ENCODE measurements at regions of chr5 and their contacts with region 1.

Region 1: DNA sequence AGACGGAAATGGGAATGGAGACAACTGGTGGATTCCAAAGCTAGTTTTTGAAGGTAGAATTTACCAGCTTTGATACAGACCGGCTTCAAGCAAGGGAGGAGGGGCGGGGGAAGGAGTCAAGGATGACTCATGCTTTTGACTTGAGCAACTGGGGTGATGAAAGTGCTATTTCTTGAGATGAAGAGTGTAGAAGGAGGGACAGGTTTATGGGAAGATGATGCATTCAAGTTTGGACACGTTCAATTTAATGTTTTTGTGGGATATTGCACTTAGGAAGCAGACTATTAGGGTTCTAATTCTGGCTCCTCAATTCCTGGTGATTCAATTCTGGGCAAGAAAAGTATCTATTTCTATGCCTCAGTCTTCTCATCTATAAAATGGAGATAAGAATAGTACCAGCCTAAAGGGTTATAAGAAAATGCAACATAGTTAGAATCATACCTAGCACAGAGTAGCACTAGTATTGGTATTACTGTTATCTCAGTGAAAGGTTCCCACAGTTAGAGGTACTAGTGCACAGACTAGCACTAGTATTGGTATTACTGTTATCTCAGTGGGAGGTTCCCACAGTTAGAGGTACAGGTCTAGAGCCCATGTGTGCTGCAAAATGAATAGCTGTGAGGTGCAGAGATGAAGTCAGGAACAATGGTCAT is 4.6 kb downstream of the NIPAL4 start:
- DNase-seq: peak; percentile 83
- H3K4me3 Mint-ChIP-seq: peak overlapping the region; percentile 0
- H3K27ac Mint-ChIP-seq: peak overlapping the region; percentile 80
- H3K4me1 Mint-ChIP-seq: peaks cover 40% of the 10 kb centered on the region
- H3K27me3 Mint-ChIP-seq: peaks cover 17% of the 10 kb centered on the region

Region 2: GRCh38 chr5:156991714-156992113 is 472.9 kb before region 1 on chr5:
- intact Hi-C with region 1: no loop called
- DNase-seq: no peak
- H3K4me3 Mint-ChIP-seq: no peak overlapping the region
- H3K27ac Mint-ChIP-seq: no peak overlapping the region
- H3K4me1 Mint-ChIP-seq: peaks cover 7% of the 10 kb centered on the region
- H3K27me3 Mint-ChIP-seq: peaks cover 2% of the 10 kb centered on the region

Region 3: DNA sequence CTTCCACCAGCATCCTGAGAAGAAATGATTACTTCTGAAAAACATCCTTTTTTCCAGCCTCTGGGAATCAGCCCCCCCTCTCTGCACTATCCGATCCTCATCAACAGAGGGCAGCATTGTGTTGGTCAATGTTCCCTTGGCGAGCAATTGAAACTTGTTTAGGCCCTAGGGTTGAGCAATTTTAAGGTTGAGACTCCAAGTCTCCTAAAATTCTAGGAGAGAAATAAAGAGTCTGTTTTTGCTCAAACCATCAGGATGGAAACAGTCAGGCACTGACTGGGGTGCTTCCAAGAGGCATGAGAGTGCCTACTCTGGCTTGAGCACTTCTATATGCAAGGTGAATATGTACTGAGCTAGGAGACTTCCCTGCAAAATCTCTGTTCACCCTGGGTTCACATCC is 211.1 kb before region 1 on chr5:
- intact Hi-C with region 1: no loop called
- DNase-seq: no peak
- H3K4me3 Mint-ChIP-seq: peak overlapping the region; percentile 61
- H3K27ac Mint-ChIP-seq: peak overlapping the region; percentile 93
- H3K4me1 Mint-ChIP-seq: peaks cover 82% of the 10 kb centered on the region
- H3K27me3 Mint-ChIP-seq: no peaks in the 10 kb centered on the region

Region 4: DNA sequence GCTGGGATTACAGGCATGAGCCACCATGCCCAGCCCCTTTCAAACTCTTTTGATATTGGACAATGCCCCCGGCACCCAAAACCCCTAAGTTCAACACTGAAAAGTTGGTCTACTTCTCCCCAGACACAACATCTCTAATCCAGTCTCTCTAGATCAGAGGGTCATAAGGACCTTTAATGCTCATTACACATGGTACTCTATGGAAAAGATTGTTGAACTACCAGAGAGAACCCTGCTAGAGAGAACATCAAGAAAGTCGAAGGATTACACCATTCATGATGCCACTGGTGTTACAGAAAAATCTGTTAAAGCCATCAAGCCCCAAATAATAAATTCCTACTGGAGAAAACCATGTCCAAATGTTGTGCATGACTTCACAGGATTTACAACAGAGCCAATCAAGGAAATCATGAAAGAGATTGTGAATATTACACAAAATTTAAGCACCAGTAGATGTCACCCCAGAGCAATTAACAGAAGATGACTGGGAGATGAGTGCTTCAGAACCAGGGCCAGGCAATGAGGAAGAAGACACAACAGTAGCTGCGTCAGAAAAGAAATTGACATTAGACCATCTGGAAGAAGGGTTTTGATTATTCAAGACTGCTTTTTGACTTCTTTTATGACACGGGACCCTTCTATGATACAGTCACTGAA is 33.0 kb before region 1 on chr5:
- intact Hi-C with region 1: loop called (anchors 2 kb)
- DNase-seq: peak; percentile 84
- H3K4me3 Mint-ChIP-seq: no peak overlapping the region
- H3K27ac Mint-ChIP-seq: no peak overlapping the region
- H3K4me1 Mint-ChIP-seq: peaks cover 11% of the 10 kb centered on the region
- H3K27me3 Mint-ChIP-seq: peaks cover 30% of the 10 kb centered on the region

Region 5: GRCh38 chr5:157731272-157732129 is 266.9 kb after region 1 on chr5 and contains the start of gene THG1L:
- intact Hi-C with region 1: loop called (anchors 5 kb)
- DNase-seq: peak; percentile 100
- H3K4me3 Mint-ChIP-seq: peak within 1 kb of the TSS; percentile 97
- H3K27ac Mint-ChIP-seq: peak within 1 kb of the TSS; percentile 98
- H3K4me1 Mint-ChIP-seq: peaks cover 25% of the 10 kb centered on the region
- H3K27me3 Mint-ChIP-seq: no peaks in the 10 kb centered on the region
- total RNA-seq, gene THG1L: 25.0 and 26.7 TPM in 2 replicates

Measured in activated CD4-positive, alpha-beta T cell treated with anti-CD3 and anti-CD28 coated beads, Interleukin-2, amount 10 ng/mL, durations not matched to agents 24 days and 14 days (primary cell).